Lower leg skin (tissue), 4 donors: ENCODE measurements at regions of chr11 and their contacts with region 1.

Region 1: GRCh38 chr11:99069856-99070444 is 49.2 kb downstream of the CNTN5 start:
- DNase-seq: no peak
- H3K4me3 ChIP-seq: no peak overlapping the region
- CTCF ChIP-seq: no peak
- POLR2A ChIP-seq: no peak

Region 2: GRCh38 chr11:99489561-99489960 is 419.6 kb after region 1 on chr11:
- intact Hi-C with region 1: no loop called
- DNase-seq: no peak
- H3K4me3 ChIP-seq: no peak overlapping the region
- CTCF ChIP-seq: no peak
- POLR2A ChIP-seq: no peak

Region 3: DNA sequence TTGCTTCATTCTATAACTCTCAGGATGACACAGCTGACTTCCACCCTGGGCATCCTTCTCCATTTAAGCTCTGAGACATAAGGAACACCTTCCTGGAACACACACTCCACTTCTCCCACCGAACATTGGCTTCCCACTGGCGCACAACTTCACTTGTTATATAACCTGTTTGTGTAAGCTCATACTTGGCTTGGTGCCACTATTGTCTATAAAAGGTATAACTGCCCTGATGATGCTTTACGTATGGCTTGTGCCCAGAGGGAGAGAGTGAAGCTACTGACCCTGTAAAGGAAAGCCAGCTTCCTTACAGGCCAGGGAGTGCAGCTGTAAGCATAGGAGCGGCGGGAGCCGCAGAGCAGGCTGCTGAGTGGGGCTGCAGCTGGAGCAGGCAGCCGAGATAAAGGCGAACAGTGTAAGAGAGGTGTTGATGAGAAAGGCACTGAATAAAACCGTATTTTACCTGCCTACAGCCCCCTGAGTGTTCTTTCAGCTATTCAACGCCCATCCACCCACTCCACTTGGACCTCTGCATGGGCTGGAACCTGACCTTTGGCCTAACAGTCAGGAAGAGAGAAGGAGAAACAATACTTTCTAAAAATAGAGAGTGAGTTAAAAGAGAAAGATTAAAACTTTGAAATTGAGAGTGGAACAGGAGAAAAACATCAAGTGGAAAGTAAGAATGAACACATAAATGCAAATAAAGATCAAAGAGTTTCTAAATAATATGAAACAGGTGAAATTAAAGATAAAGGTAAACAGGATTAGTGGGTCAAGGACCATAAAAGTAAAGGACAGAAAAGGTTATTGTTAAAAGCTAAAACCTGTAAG is 1365.1 kb after region 1 on chr11:
- intact Hi-C with region 1: loop called (anchors 5 kb)
- DNase-seq: no peak
- H3K4me3 ChIP-seq: no peak overlapping the region
- CTCF ChIP-seq: no peak
- POLR2A ChIP-seq: no peak